ENCODE measurements at regions of chr10 and their contacts with region 1.

Region 1: GRCh38 chr10:47311932-47312662 is 10.2 kb upstream of the GDF2 start:
- DNase-seq: peak; percentile 32
- ATAC-seq: peak; percentile 96
- H3K4me3 ChIP-seq: no peak overlapping the region
- H3K27ac ChIP-seq: no peak overlapping the region
- H3K4me1 ChIP-seq: no peaks in the 10 kb centered on the region
- H3K27me3 ChIP-seq: peaks cover 4% of the 10 kb centered on the region; the same call in 1 of the 2 replicates
- CTCF ChIP-seq: peak; percentile 96

Region 2: GRCh38 chr10:46995234-46995633 is 316.9 kb before region 1 on chr10:
- CTCF ChIA-PET with region 1: interaction called, 19 read pairs
- POLR2A ChIA-PET with region 1: no interaction called
- in situ Hi-C with region 1: no loop called
- intact Hi-C with region 1: no loop called
- DNase-seq: no peak
- ATAC-seq: no peak
- H3K4me3 ChIP-seq: no peak overlapping the region
- H3K27ac ChIP-seq: no peak overlapping the region
- H3K4me1 ChIP-seq: no peaks in the 10 kb centered on the region
- H3K27me3 ChIP-seq: no peaks in the 10 kb centered on the region
- CTCF ChIP-seq: peak; percentile 18; the same call in 1 of the 2 replicates

Region 3: DNA sequence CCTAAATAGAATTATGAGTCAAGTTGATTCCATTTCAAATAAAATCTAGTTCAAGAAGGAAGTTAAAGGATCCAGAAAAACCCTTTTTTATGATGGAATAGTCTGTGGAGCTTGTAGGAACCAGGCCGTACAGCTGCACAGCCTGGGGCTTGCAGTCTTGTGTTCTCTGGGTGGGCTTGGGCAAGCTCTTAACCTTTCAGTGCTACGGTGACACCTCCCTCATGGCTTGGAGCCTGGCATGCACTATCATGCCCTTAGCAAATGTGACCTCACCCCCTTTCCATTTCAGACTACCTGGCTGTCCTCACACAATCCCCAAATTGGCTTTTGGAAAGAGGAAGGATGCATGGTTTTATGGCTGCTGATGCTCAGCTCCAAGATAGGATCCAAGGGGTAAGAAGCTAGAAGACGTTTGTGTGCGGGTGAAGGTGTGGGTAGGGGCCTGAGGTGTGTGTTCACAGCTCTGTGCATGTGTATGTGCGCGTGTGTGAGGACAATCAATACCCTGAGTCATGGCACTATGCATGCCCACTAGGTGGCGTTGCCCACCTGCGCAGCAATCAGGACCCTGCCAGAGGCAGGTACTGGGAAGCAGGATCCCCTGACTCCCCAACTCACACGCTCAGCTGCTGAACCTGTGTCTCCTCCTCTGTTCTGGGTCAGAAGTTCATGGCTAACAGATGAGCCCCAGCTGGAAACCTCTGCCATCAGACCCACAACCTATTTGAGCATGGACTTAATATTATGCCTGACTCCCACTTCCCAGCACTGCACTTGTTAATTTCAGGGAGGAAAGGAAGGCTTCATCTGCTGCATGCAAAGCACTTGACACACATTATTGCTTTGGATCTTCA is 287.5 kb before region 1 on chr10:
- CTCF ChIA-PET with region 1: interaction called, 6 read pairs
- POLR2A ChIA-PET with region 1: no interaction called
- in situ Hi-C with region 1: no loop called
- intact Hi-C with region 1: loop called (anchors 2 kb)
- DNase-seq: peak; percentile 68
- ATAC-seq: peak; percentile 93
- H3K4me3 ChIP-seq: no peak overlapping the region
- H3K27ac ChIP-seq: no peak overlapping the region
- H3K4me1 ChIP-seq: no peaks in the 10 kb centered on the region
- H3K27me3 ChIP-seq: no peaks in the 10 kb centered on the region
- CTCF ChIP-seq: peak; percentile 99

Region 4: DNA sequence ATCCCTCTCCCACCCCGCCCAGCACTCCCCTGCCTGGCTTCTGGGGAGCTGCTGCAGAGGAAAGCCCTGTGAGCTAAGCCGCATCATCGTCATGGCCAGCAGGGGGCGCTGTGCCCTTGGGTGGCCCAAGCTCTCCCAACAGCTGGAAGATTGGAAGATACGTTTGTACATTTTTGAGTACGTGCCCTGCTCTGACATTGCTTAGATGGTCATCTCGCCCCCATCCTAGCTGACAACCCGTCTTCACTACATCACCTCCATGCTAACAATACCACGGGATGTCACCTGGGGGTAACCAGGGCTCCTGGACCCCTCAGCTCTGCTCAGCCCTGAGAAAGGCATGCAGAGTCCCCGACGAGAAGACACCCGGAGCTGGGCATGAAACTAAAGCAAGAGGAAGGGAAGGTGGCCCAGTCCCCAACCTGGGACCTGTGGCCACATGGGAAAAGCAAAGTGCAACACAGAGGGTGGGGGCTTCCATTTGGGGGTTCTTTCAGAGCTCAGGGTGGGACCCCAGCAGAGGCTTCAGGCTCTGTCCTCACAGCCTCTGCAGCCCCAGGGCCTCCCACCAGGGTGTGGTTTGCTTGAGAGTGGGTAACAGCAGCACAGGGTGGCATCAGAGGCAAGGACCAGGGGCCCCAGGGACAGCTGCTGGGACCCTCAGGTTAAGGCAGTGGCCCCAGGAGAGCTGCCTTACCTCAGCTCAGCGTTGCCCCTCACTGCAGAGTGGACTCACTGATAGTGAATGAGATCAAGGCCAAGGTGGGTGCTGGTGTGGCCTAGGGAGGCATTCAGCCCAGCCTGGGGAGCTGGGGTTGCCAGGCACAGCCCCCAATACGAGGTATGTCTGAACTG is 264.2 kb before region 1 on chr10:
- CTCF ChIA-PET with region 1: interaction called, 30 read pairs
- POLR2A ChIA-PET with region 1: no interaction called
- in situ Hi-C with region 1: no loop called
- intact Hi-C with region 1: loop called (anchors 1 kb)
- DNase-seq: peak; percentile 38
- ATAC-seq: peak; percentile 91
- H3K4me3 ChIP-seq: no peak overlapping the region
- H3K27ac ChIP-seq: no peak overlapping the region
- H3K4me1 ChIP-seq: no peaks in the 10 kb centered on the region
- H3K27me3 ChIP-seq: no peaks in the 10 kb centered on the region
- CTCF ChIP-seq: peak; percentile 96

Region 5: DNA sequence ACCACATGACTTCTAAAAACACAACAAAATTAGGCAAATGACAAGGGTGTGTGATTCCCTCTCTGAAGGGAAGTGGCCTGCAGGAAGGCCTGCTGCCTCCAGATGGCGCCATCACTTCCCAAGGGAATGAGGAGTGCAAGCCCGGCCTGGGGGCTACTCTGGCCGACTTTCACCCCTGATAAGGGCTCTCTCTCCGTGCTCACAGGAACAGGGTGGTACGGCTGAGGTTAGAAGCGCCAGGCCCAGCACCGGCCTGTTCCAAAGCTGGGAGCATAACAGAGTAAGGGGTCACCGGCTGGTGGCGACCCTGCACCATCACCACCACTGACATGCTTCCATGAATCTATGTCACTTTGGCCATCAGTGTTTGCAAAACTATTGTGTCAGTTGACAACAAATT is 49.2 kb after region 1 on chr10:
- CTCF ChIA-PET with region 1: no interaction called
- POLR2A ChIA-PET with region 1: no interaction called
- in situ Hi-C with region 1: no loop called
- intact Hi-C with region 1: no loop called
- DNase-seq: no peak
- ATAC-seq: peak; percentile 61
- H3K4me3 ChIP-seq: no peak overlapping the region
- H3K27ac ChIP-seq: no peak overlapping the region
- H3K4me1 ChIP-seq: peaks cover 4% of the 10 kb centered on the region; the same call in 1 of the 2 replicates
- H3K27me3 ChIP-seq: no peaks in the 10 kb centered on the region
- CTCF ChIP-seq: peak; percentile 94

Measured in Panc1 (cell line).